B cell (primary cell): ENCODE measurements at regions of chr6 and their contacts with region 1.

Region 1: DNA sequence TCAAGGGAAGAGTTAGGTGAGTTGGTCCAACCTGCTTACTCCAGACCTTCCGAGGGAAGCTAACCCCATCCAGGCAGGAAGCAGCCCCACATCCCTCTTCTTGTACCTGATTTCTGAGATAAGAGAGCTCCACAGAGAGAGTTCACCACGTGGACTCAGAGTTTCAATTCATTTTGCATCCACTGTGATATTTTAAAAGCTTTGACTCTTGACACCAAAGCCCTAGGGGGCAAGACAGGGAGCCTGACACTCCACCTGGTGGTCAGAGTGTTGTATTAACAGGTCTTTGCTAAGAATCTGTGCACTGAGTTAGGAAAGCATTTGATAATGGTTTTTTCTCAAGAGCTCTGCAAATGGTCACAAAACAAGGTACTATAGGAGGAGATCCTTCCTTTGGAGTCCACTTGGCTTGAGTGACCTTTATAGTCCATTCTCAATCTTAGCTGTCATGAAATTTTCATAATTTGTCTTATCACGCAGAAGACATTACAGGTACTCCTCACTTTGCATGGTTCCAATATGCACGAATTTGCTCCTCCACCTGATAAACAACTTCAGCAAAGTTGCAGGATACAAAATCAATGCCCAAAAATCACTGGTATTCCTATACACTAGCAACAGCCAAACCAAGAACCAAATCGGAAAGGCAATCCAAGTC is 56.2 kb upstream of the RIPOR2 start:
- DNase-seq: peak; percentile 88
- ATAC-seq: peak; percentile 87
- H3K4me3 ChIP-seq: peak overlapping the region in 3 of 5 experiments; percentile 13 to 27 (median 17)
- H3K4me3 Mint-ChIP-seq: peak overlapping the region; percentile 58
- H3K27ac ChIP-seq: peak overlapping the region; percentile 48 to 83
- H3K27ac Mint-ChIP-seq: peak overlapping the region; percentile 90
- H3K4me1 ChIP-seq: peaks cover 53 to 63% of the 10 kb centered on the region in 2 donors
- H3K4me1 Mint-ChIP-seq: peaks cover 75% of the 10 kb centered on the region
- H3K27me3 ChIP-seq: no peaks in the 10 kb centered on the region
- H3K27me3 Mint-ChIP-seq: no peaks in the 10 kb centered on the region
- CTCF ChIP-seq: peak; percentile 86

Region 2: DNA sequence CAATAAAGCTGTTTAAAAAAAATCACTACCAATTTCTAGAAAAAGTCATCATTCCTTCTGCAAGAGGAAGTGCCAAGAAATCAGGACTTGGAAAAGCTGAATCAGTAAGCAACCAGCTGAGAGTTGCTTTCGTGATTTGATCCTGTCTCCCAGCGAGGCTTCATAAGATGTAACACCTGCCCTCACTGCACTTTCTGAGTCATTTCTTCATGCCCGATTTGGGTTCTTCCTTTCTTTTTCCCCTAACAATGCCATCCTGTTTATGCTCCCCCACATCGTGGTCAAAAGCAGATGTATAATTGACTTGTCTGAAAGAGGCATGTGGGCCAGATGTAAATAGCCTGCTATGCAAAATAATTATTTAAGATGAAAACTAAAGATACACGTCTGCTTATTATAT is 108.3 kb before region 1 on chr6:
- CTCF ChIA-PET with region 1: interaction called, 39 read pairs
- POLR2A ChIA-PET with region 1: interaction called, 3 read pairs
- intact Hi-C with region 1: no loop called
- DNase-seq: peak; percentile 27
- ATAC-seq: no peak
- H3K4me3 ChIP-seq: no peak overlapping the region
- H3K4me3 Mint-ChIP-seq: peak overlapping the region; percentile 76
- H3K27ac ChIP-seq: peak overlapping the region; percentile 26 to 84
- H3K27ac Mint-ChIP-seq: peak overlapping the region; percentile 87
- H3K4me1 ChIP-seq: peaks cover 69 to 74% of the 10 kb centered on the region in 2 donors
- H3K4me1 Mint-ChIP-seq: peaks cover 87% of the 10 kb centered on the region
- H3K27me3 ChIP-seq: no peaks in the 10 kb centered on the region
- H3K27me3 Mint-ChIP-seq: no peaks in the 10 kb centered on the region
- CTCF ChIP-seq: no peak

Region 3: DNA sequence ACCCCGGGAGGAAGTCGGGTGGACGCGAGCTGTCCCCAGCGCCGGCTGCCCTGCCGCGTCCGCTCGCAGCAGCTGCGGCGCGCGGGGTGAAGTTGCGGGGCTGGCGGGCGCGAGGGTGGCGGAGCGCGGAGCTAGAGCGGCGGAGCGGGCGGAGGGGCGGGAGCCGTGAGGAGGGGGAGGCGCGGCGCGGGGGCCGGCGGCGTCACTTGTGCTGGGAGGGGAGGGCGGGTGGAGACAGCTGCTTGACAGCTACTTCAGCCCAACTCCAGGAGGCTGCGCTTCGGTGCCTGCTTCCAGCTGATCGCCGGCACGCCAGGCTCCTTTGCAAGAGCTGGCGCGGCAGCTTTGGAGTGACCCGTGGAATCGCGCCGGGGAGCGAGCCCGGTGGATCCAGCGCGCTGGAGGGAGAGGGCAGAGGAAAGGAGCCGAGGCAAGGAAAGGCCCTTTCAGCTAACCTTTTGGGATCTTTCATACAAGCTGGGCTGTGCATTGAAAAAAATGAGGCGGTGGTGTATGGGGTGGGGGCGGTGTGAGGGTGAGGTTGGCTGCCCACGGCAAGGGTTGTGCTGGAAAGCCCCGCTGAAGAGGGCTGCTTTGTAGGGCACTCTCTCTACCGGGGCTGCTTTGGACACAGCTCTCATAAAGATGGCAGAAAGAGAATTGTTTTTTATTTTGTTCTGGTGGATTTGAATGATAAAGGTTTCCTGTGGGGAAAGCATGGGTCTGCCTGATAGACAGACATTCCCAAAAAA is 80.8 kb before region 1 on chr6:
- CTCF ChIA-PET with region 1: interaction called, 148 read pairs
- POLR2A ChIA-PET with region 1: interaction called, 31 read pairs
- intact Hi-C with region 1: loop called (anchors 2 kb)
- DNase-seq: no peak
- ATAC-seq: peak; percentile 38
- H3K4me3 ChIP-seq: peak overlapping the region; percentile 45 to 66 (median 58)
- H3K4me3 Mint-ChIP-seq: peak overlapping the region; percentile 90
- H3K27ac ChIP-seq: peak overlapping the region; percentile 83 to 93
- H3K27ac Mint-ChIP-seq: peak overlapping the region; percentile 89
- H3K4me1 ChIP-seq: peaks cover 97 to 98% of the 10 kb centered on the region in 2 donors
- H3K4me1 Mint-ChIP-seq: peaks cover 94% of the 10 kb centered on the region
- H3K27me3 ChIP-seq: no peaks in the 10 kb centered on the region
- H3K27me3 Mint-ChIP-seq: no peaks in the 10 kb centered on the region
- CTCF ChIP-seq: no peak

Region 4: DNA sequence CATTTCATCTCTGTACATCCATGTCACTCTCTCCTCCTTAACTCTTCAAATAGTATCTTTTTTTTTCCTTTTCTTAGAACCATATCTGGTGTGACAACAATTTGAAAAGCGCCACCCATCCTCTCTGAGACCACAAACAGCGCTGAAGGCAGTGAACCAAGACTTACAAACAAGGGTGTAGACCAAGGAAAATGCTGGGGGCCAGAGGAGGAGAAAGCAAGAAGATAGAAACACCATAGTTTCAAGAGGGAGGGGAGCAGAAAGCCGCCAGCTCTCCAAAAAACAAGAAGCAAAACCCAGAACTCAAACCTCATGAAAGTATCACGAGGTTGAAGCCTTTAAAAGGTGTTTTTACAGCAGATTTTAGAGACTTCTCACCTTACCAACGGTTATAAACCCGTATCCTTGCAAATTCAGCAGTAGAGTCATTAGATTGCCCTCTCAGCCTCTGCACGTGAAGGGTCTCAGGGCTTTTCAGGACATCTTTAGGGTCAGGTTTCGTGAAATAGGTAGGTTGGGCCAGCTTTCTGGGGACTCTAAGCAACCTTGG is 42.8 kb before region 1 on chr6:
- CTCF ChIA-PET with region 1: interaction called, 139 read pairs
- POLR2A ChIA-PET with region 1: interaction called, 16 read pairs
- intact Hi-C with region 1: loop called (anchors 1 kb)
- DNase-seq: peak; percentile 91
- ATAC-seq: peak; percentile 90
- H3K4me3 ChIP-seq: peak overlapping the region in 3 of 5 experiments; percentile 15 to 58 (median 31)
- H3K4me3 Mint-ChIP-seq: peak overlapping the region; percentile 79
- H3K27ac ChIP-seq: peak overlapping the region; percentile 92 to 93
- H3K27ac Mint-ChIP-seq: peak overlapping the region; percentile 98
- H3K4me1 ChIP-seq: peaks cover 79 to 84% of the 10 kb centered on the region in 2 donors
- H3K4me1 Mint-ChIP-seq: peaks cover 73% of the 10 kb centered on the region
- H3K27me3 ChIP-seq: no peaks in the 10 kb centered on the region
- H3K27me3 Mint-ChIP-seq: no peaks in the 10 kb centered on the region
- CTCF ChIP-seq: no peak

Region 5: DNA sequence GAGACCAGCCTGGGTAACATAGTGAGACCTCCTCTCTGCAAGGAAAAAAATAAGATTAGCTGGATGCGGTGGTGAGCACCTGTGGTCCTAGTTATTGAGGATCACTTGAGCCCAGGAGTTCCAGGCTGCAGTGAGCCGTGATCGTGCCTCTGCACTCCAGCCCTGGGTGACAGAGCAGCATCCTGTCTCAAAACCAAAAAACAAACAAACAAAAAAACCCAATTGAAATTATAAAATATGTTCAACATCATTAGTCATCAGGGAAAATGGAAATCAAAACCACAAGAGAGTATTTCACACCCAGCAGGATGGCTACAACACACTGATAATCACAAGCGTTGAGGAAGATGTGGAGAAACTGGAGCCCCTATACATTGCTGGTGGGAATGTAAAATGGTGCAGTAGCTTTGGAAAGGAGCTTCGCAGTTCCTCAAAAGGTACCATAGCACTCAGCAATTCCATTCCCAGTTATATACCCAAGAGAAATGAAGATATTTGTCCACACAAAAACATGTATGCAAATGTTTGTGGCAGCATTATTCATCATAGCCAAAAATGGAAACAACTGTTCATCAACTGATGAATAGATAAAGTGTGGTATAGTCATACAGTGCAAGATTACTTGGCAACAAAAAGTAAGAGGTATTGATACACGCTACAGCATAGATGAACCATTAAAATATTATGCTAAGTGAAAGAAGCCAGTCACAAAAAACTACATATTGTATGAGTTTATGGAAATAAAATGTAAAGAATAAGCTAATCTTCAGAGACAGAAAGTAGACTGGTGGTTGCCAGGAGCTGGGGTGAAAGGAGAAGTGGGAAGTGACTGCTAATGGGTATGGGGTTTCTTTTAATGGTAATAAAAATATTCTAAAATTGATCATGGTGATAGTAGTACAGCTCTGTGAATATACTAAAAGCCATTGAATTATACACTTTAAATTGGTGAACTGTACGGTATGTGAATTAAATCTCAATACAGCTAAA is 17.5 kb before region 1 on chr6:
- CTCF ChIA-PET with region 1: interaction called, 36 read pairs
- POLR2A ChIA-PET with region 1: interaction called, 6 read pairs
- intact Hi-C with region 1: loop called (anchors 2 kb)
- DNase-seq: peak; percentile 43
- ATAC-seq: peak; percentile 79
- H3K4me3 ChIP-seq: peak overlapping the region in 1 of 5 experiments; percentile 33
- H3K4me3 Mint-ChIP-seq: peak overlapping the region; percentile 76
- H3K27ac ChIP-seq: peak overlapping the region; percentile 42 to 50
- H3K27ac Mint-ChIP-seq: peak overlapping the region; percentile 90
- H3K4me1 ChIP-seq: peaks cover 34 to 42% of the 10 kb centered on the region in 2 donors
- H3K4me1 Mint-ChIP-seq: peaks cover 65% of the 10 kb centered on the region
- H3K27me3 ChIP-seq: no peaks in the 10 kb centered on the region
- H3K27me3 Mint-ChIP-seq: no peaks in the 10 kb centered on the region
- CTCF ChIP-seq: no peak

Region 6: DNA sequence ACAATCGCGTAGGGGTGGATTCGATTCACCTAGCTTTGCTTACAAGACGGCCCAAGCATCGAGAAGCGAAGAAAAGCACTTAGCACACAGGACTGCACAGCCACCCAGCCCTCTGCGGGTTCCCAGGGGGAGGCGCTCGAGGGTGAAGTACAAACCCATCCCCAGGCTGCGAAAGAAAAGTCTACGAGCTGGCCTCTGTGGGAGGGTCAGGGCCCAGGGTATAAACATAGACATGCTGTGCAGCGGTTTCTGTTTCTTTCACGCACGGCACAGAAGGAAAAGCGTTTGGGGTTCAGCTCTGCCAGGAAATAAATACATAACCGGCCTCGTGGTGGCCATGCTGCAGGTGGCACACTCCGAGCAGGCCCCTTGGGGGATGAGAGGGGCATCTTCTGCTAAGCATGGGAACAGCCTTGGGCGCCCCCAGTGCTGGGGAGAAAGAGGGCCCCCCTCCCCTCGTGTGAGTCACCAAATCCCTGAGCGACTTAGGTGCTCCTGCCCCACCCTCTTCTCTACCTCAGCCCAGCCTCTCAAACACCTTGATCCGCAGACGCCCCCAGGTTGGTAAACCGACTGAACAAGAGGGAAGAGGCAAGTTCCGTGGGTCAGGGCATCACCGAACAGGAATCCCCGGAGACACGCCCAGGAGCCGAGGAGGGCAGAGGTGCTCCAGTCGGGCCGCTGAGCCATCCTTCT is 35.4 kb after region 1 on chr6:
- CTCF ChIA-PET with region 1: interaction called, 33 read pairs
- POLR2A ChIA-PET with region 1: no interaction called
- intact Hi-C with region 1: no loop called
- DNase-seq: peak; percentile 83
- ATAC-seq: peak; percentile 95
- H3K4me3 ChIP-seq: peak overlapping the region in 4 of 5 experiments; percentile 14 to 56 (median 46)
- H3K4me3 Mint-ChIP-seq: peak overlapping the region; percentile 90
- H3K27ac ChIP-seq: peak overlapping the region; percentile 60 to 63
- H3K27ac Mint-ChIP-seq: peak overlapping the region; percentile 90
- H3K4me1 ChIP-seq: peaks cover 16 to 18% of the 10 kb centered on the region in 2 donors
- H3K4me1 Mint-ChIP-seq: peaks cover 40% of the 10 kb centered on the region
- H3K27me3 ChIP-seq: no peaks in the 10 kb centered on the region
- H3K27me3 Mint-ChIP-seq: no peaks in the 10 kb centered on the region
- CTCF ChIP-seq: peak; percentile 65

Region 7: GRCh38 chr6:25136854-25137253 is 144.9 kb after region 1 on chr6:
- CTCF ChIA-PET with region 1: no interaction called
- POLR2A ChIA-PET with region 1: no interaction called
- intact Hi-C with region 1: no loop called
- DNase-seq: peak; percentile 20
- ATAC-seq: no peak
- H3K4me3 ChIP-seq: peak overlapping the region in 4 of 5 experiments; percentile 45 to 95 (median 72)
- H3K4me3 Mint-ChIP-seq: peak overlapping the region; percentile 90
- H3K27ac ChIP-seq: peak overlapping the region; percentile 81 to 87
- H3K27ac Mint-ChIP-seq: peak overlapping the region; percentile 93
- H3K4me1 ChIP-seq: peaks cover 21 to 25% of the 10 kb centered on the region in 2 donors
- H3K4me1 Mint-ChIP-seq: peaks cover 40% of the 10 kb centered on the region
- H3K27me3 ChIP-seq: no peaks in the 10 kb centered on the region
- H3K27me3 Mint-ChIP-seq: no peaks in the 10 kb centered on the region
- CTCF ChIP-seq: no peak

Region 8: GRCh38 chr6:25147223-25147622 is 155.3 kb after region 1 on chr6:
- CTCF ChIA-PET with region 1: no interaction called
- POLR2A ChIA-PET with region 1: no interaction called
- intact Hi-C with region 1: no loop called
- DNase-seq: peak; percentile 55
- ATAC-seq: peak; percentile 88
- H3K4me3 ChIP-seq: no peak overlapping the region
- H3K4me3 Mint-ChIP-seq: peak overlapping the region; percentile 41
- H3K27ac ChIP-seq: no peak overlapping the region
- H3K27ac Mint-ChIP-seq: peak overlapping the region; percentile 41
- H3K4me1 ChIP-seq: peaks cover 6 to 16% of the 10 kb centered on the region in 2 donors
- H3K4me1 Mint-ChIP-seq: peaks cover 22% of the 10 kb centered on the region
- H3K27me3 ChIP-seq: no peaks in the 10 kb centered on the region
- H3K27me3 Mint-ChIP-seq: no peaks in the 10 kb centered on the region
- CTCF ChIP-seq: no peak